ENCODE measurements at regions of chr7 and their contacts with region 1.

Region 1: GRCh38 chr7:34133983-34134782 is 228.8 kb downstream of the BMPER start:
- DNase-seq: no peak
- ATAC-seq: peak; percentile 84
- H3K4me3 ChIP-seq: no peak overlapping the region
- H3K27ac ChIP-seq: no peak overlapping the region
- H3K4me1 ChIP-seq: no peaks in the 10 kb centered on the region
- H3K27me3 ChIP-seq: no peaks in the 10 kb centered on the region
- CTCF ChIP-seq: peak; percentile 57 to 62 (median 62)
- EP300 ChIP-seq: no peak
- POLR2A ChIP-seq: no peak
- RAD21 ChIP-seq: peak; percentile 70

Region 2: DNA sequence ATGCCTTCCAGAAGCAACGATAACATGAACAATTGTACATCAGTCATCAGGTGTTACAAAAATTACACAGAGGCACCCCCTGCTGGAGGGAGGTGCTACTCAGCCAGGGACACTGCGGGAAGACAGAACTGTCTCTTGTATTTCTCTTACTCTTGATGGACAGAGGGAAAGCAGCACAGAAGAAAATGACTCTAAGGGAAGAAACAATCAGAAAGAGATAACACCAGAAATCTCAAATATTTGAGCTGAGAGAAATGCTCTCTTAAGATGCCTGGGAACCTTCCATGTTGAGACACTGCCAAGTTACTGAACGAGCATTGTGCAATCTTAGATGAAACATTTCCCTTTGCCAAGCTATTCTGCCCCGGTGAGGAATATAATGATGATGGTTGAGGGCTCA is 296.3 kb after region 1 on chr7:
- CTCF ChIA-PET with region 1: interaction called, 3 read pairs
- POLR2A ChIA-PET with region 1: no interaction called
- RAD21 ChIA-PET with region 1: no interaction called
- SMC1A ChIA-PET with region 1: no interaction called
- in situ Hi-C with region 1: no loop called
- intact Hi-C with region 1: loop called (anchors 10 kb)
- DNase-seq: no peak
- ATAC-seq: peak; percentile 80
- H3K4me3 ChIP-seq: no peak overlapping the region
- H3K27ac ChIP-seq: no peak overlapping the region
- H3K4me1 ChIP-seq: no peaks in the 10 kb centered on the region
- H3K27me3 ChIP-seq: no peaks in the 10 kb centered on the region
- CTCF ChIP-seq: peak; percentile 18 to 61 (median 43); a peak in 3 of 6 replicates
- EP300 ChIP-seq: no peak
- POLR2A ChIP-seq: no peak
- RAD21 ChIP-seq: peak; percentile 47

Region 3: DNA sequence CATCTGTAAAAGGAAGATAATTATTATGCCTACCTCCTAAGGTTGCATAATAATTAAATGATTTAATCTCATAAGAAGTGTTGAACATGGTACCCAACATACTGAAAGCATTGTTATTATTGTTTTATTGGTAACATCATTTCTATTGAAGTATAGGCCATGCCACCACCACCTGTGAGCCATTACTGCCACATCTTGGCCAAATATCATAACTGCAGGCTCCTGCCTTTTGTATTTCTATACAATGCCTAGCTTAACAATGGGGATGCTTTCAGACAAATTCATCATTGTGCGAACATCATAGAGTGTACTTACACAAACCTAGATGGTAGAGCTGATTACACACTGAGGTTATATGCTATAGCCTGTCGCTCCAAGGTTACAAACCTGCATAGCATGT is 462.7 kb after region 1 on chr7:
- CTCF ChIA-PET with region 1: interaction called, 10 read pairs
- POLR2A ChIA-PET with region 1: no interaction called
- RAD21 ChIA-PET with region 1: interaction called, 9 read pairs
- SMC1A ChIA-PET with region 1: interaction called, 4 read pairs
- in situ Hi-C with region 1: no loop called
- intact Hi-C with region 1: loop called (anchors 2 kb)
- DNase-seq: no peak
- ATAC-seq: peak; percentile 66
- H3K4me3 ChIP-seq: no peak overlapping the region
- H3K27ac ChIP-seq: no peak overlapping the region
- H3K4me1 ChIP-seq: no peaks in the 10 kb centered on the region
- H3K27me3 ChIP-seq: no peaks in the 10 kb centered on the region
- CTCF ChIP-seq: peak; percentile 15 to 48 (median 27); a peak in 3 of 6 replicates
- EP300 ChIP-seq: no peak
- POLR2A ChIP-seq: no peak
- RAD21 ChIP-seq: peak; percentile 56